Activated CD4-positive, alpha-beta T cell treated with anti-CD3 and anti-CD28 coated beads for 36 hours (primary cell): ENCODE measurements at regions of chr6 and their contacts with region 1.

Region 1: GRCh38 chr6:44127186-44128019 is at the starts of genes MRPL14 and TMEM63B:
- DNase-seq: peak; percentile 95
- ATAC-seq: peak; percentile 81
- H3K4me3 Mint-ChIP-seq: peak within 1 kb of the TSS; percentile 82
- H3K27ac Mint-ChIP-seq: peak within 1 kb of the TSS; percentile 96
- H3K4me1 Mint-ChIP-seq: peaks cover 46% of the 10 kb centered on the region
- H3K27me3 Mint-ChIP-seq: no peaks in the 10 kb centered on the region
- total RNA-seq, gene MRPL14: 29.5 to 43.3 TPM
- total RNA-seq, gene TMEM63B: 10.9 to 15.2 TPM

Region 2: GRCh38 chr6:44002593-44003344 is 124.6 kb before region 1 on chr6:
- CTCF ChIA-PET with region 1: no interaction called
- POLR2A ChIA-PET with region 1: no interaction called
- intact Hi-C with region 1: loop called in 1 of 2 experiments (anchors 2 kb)
- DNase-seq: peak; percentile 87
- ATAC-seq: peak; percentile 65
- H3K4me3 Mint-ChIP-seq: peak overlapping the region; percentile 58
- H3K27ac Mint-ChIP-seq: no peak overlapping the region
- H3K4me1 Mint-ChIP-seq: peaks cover 11% of the 10 kb centered on the region
- H3K27me3 Mint-ChIP-seq: peaks cover 16% of the 10 kb centered on the region

Region 3: DNA sequence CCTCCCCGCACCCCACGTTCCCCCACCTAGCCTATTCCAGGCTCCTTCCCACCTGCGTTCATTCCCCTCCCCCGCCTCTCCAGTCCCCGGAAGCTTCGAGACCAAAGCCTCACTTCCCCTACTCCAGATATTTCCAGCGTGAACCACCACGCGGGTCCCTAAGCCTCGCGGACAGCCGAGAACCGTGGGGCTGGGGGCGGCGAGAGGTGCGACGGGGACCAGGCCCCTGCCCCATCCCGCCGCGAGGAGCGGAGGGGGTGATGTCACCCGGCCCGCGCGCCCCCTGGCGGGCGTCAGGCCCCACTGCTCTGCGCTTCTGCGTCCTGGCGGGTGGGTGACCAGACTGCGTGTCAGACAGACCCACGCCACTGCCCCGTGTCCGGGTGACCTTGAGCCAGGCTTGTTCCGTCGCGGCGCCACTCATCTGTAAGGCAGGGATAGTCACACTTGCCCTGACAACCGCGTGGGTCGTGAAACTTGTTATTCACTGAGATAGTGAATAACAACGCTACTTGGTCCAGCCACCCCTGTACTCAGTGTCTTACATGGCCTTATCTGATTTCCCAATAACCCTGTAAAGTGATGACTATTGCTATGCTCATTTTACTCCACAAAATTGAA is 110.5 kb after region 1 on chr6:
- CTCF ChIA-PET with region 1: no interaction called
- POLR2A ChIA-PET with region 1: no interaction called
- intact Hi-C with region 1: loop called in 1 of 2 experiments (anchors 2 kb)
- DNase-seq: peak; percentile 88
- ATAC-seq: peak; percentile 78
- H3K4me3 Mint-ChIP-seq: peak overlapping the region; percentile 75
- H3K27ac Mint-ChIP-seq: peak overlapping the region; percentile 94
- H3K4me1 Mint-ChIP-seq: peaks cover 31% of the 10 kb centered on the region
- H3K27me3 Mint-ChIP-seq: no peaks in the 10 kb centered on the region

Region 4: DNA sequence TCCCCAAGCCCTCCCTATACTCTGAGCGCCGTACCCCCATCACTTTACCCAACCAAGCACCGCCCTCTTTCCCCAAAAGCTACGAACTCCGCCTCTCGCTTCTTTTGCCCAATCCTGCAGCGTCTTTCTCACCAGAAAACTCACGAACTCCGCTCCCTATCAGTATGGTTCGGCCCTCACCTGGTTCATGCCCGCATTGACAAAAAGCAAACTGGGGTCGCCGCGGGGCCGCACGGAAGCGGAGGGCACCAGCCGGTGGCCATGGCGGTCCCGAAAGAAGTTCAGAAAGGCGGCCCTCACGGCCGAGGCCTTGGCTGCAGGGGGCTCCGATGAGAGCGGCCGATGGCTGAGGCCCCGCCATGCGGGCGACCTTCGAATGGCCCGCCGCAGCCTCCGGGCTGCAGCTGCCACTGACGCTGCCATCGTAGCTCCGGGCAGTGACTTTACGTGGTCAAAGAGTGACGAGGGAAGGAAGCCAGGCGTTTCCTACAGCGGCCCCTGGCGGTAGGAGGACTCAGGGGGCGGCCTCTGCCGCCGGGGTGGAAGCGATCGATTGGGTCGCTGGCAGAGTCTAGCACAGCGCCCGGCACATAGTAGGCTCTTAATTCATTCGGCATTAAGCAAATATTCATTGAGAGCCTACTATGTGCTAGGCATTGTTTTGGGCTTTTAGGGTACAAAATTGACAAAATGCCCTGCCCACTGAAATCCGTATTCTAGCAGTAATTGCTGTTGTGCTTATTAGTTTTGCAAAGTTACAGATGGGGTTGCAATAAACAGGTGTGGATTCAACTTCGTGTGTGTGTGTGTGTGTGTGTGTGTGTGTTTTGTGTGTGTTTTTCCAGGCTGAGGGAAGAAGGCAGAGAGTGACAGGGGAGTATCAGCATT is 185.7 kb after region 1 on chr6 and contains the start of gene AARS2:
- CTCF ChIA-PET with region 1: no interaction called
- POLR2A ChIA-PET with region 1: no interaction called
- intact Hi-C with region 1: loop called in 1 of 2 experiments (anchors 1 kb)
- DNase-seq: peak; percentile 96
- ATAC-seq: peak; percentile 96
- H3K4me3 Mint-ChIP-seq: peak within 1 kb of the TSS; percentile 98
- H3K27ac Mint-ChIP-seq: peak within 1 kb of the TSS; percentile 86
- H3K4me1 Mint-ChIP-seq: peaks cover 14% of the 10 kb centered on the region
- H3K27me3 Mint-ChIP-seq: peaks cover 1% of the 10 kb centered on the region
- total RNA-seq, gene AARS2: 15.2 to 17.5 TPM